GM23248 (cell line): ENCODE measurements at regions of chr22 and their contacts with region 1.

Region 1: DNA sequence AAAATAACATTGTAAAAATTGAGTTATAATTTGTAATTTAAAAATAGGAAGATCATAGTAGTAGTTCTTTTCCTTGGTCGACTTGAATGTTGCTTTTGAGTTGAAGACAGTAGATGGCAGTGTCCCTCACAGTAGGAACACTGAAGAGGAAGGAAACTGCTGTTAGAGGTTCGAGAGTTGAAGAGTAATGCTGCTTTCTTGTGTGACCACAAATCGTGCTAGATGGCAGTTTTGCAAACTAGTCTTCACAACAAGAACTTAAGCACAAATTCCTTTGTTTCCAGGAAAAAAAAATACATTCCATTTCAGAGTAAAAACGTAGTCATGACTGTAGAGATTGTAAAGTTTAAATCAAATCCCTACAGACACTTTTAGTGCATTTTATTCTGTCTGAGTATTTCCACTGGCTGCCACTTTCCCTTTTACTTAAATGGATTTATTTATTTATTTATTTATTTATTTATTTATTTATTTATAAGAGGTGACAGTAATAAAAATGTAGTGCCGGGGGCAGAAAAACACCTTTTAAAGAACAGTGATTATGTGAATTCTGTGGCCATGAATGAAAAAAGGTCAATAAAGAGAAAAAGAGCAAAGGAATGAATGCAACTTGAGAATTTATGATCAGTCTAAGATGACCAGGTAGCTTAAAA is 54.6 kb downstream of the SPECC1L start:
- DNase-seq: peak; percentile 93
- H3K4me3 ChIP-seq: no peak overlapping the region
- H3K27ac ChIP-seq: peak overlapping the region; percentile 37
- H3K4me1 ChIP-seq: peaks cover 16% of the 10 kb centered on the region
- H3K27me3 ChIP-seq: no peaks in the 10 kb centered on the region

Region 2: DNA sequence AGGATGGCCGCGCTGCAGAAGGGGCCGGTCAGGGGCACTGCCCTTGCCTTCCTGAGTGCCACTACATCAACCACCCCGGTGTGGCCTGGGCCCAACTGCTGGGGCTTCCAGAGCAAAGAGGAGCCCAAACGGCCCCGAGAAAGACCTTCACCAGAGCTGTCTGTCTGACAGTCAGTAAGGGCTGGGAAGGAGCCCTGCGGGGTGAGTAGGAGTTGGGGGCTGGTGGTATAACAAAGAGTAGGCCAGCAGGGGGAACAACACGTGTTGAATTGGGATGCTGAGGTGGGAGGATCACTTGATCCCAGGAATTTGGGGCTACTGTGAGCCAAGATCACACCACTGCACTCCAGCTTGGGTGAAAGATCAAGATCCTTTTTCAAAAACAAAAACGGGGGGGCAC is 323.9 kb before region 1 on chr22:
- in situ Hi-C with region 1: no loop called
- DNase-seq: no peak
- H3K4me3 ChIP-seq: no peak overlapping the region
- H3K27ac ChIP-seq: no peak overlapping the region
- H3K4me1 ChIP-seq: no peaks in the 10 kb centered on the region
- H3K27me3 ChIP-seq: no peaks in the 10 kb centered on the region

Region 3: DNA sequence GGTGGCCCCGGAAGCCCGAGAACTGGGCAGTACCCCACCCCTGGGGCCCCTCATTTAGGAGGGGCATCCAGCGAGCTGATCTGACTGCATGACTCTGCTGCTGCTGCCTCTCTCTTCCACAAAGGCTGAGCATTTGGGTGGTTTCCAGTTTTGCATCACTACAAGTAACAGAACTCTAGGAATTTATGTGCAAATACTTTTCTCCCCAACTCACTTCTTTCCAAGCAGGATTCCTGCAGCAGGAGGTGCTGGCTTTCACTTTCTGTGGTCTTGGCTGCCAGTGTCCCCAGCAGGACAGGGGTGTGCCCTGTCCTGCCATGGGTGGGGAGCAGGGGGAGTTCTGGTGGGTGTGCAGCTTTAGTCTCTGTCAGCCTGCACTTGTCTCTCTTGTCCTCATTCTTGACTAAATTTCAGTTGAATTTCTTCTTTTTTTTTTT is 191.1 kb after region 1 on chr22:
- in situ Hi-C with region 1: loop called (anchors 10 kb)
- DNase-seq: peak; percentile 92
- H3K4me3 ChIP-seq: peak overlapping the region; percentile 30
- H3K27ac ChIP-seq: no peak overlapping the region
- H3K4me1 ChIP-seq: peaks cover 13% of the 10 kb centered on the region
- H3K27me3 ChIP-seq: peaks cover 15% of the 10 kb centered on the region; the same call in 1 of the 2 replicates